Caco-2 (cell line): ENCODE measurements at regions of chr20 and their contacts with region 1.

Region 1: DNA sequence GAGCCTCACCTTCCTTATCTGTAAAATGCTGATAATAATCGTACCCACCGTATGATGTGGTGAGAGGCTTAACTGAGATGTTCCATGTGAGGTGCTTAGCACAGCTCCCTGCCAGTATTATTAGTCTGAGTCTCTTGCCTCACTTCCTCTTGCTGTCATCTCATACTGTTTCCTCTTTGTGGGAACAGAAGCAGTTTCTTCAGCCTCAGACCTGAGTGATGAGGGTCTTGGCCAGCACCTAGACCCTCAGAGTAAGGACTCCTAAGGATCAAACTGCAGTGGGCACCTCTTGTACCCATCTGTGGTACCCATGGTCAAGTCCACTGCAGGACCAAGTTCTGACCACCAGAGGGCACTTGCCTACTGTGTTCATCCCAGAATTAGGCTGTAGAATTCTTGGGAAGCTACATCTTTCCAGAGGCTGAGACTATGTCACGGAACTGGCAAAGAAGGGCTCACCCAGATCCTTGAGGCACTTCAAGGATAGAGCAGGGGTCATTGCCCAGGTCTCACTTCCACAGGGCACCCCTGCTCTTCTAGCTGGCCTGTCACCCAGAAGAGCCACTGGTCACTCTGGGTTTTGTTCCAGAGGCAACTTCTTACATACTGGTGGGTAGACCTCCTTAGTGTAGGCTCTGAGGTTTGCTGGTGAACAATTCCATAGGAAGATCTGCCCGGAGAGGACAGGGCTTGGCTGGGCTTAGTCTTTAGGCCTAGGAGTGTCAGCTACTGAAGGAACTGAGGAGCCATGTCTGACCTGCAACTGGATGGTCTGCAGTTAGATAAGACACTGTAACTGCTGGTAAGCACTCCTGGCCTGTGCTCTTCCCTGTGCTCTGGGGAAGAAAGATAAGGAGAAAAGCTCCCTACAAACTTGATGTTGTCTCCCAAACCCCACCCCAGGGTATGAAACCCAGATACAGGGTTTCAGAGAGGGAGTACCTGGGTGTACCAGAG is 20.6 kb upstream of the SGK2 start:
- DNase-seq: peak; percentile 83 to 88
- H3K4me3 ChIP-seq: no peak overlapping the region
- H3K4me3 Mint-ChIP-seq: no peak overlapping the region
- H3K27ac Mint-ChIP-seq: no peak overlapping the region
- H3K4me1 ChIP-seq: peaks cover 5% of the 10 kb centered on the region; the same call in 1 of the 2 replicates
- H3K4me1 Mint-ChIP-seq: no peaks in the 10 kb centered on the region
- H3K27me3 ChIP-seq: no peaks in the 10 kb centered on the region
- H3K27me3 Mint-ChIP-seq: no peaks in the 10 kb centered on the region
- CTCF ChIP-seq: peak; percentile 99

Region 2: GRCh38 chr20:43448748-43449535 is 89.3 kb before region 1 on chr20:
- CTCF ChIA-PET with region 1: interaction called, 16 read pairs
- POLR2A ChIA-PET with region 1: no interaction called
- intact Hi-C with region 1: loop called (anchors 1 kb)
- DNase-seq: peak; percentile 72 to 78
- H3K4me3 ChIP-seq: no peak overlapping the region
- H3K4me3 Mint-ChIP-seq: no peak overlapping the region
- H3K27ac Mint-ChIP-seq: no peak overlapping the region
- H3K4me1 ChIP-seq: no peaks in the 10 kb centered on the region
- H3K4me1 Mint-ChIP-seq: no peaks in the 10 kb centered on the region
- H3K27me3 ChIP-seq: no peaks in the 10 kb centered on the region
- H3K27me3 Mint-ChIP-seq: peaks cover 2% of the 10 kb centered on the region
- CTCF ChIP-seq: peak; percentile 95

Region 3: DNA sequence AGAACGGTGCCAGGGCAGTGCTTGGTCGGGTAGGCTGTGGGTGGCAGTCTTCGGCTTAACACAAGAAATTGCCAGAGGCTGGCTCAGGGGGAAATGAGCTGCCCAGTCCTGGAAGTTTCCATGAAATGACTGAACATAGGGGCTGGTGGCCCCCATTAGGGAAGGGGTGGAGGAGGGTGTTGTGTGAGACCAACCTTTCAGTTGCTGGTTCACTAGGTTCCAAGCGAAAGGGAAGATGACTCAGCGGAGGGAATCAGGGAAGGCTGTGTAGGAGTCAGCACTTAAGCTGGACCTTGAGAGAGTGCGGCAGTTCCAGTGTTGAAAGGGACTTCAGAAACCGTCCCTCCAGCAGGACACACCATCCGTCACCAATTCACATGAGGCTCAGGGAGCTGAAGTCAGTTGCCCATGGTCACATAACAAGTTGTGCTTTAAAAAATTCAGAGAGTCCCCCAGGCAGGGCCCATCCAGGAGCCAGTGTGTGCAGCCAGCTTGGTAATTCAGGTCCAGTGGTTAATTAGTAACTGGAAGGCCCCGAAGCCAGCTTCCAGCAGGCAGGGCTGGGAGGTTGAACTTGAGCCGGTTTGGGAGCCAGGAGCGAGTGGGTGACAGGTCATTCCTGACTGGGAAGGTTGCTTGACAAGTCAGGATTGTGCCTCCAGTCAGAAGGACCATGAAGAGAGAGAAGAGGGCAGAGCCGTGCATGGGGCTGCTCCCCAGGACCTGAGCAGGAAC is 20.4 kb after region 1 on chr20 and contains the start of gene SGK2:
- CTCF ChIA-PET with region 1: interaction called, 32 read pairs
- POLR2A ChIA-PET with region 1: interaction called, 6 read pairs
- intact Hi-C with region 1: loop called (anchors 2 kb)
- DNase-seq: peak; percentile 90 to 94
- H3K4me3 ChIP-seq: no peak within 1 kb of the TSS
- H3K4me3 Mint-ChIP-seq: peak within 1 kb of the TSS; percentile 15
- H3K27ac Mint-ChIP-seq: peak within 1 kb of the TSS; percentile 23
- H3K4me1 ChIP-seq: peaks cover 30% of the 10 kb centered on the region
- H3K4me1 Mint-ChIP-seq: peaks cover 17% of the 10 kb centered on the region
- H3K27me3 ChIP-seq: no peaks in the 10 kb centered on the region
- H3K27me3 Mint-ChIP-seq: no peaks in the 10 kb centered on the region
- CTCF ChIP-seq: no peak
- total RNA-seq, gene SGK2: 5.2 and 6.6 TPM in 2 replicates

Region 4: GRCh38 chr20:43570496-43570895 is 32.3 kb after region 1 on chr20:
- CTCF ChIA-PET with region 1: no interaction called
- POLR2A ChIA-PET with region 1: no interaction called
- intact Hi-C with region 1: no loop called
- DNase-seq: no peak
- H3K4me3 ChIP-seq: no peak overlapping the region
- H3K4me3 Mint-ChIP-seq: no peak overlapping the region
- H3K27ac Mint-ChIP-seq: no peak overlapping the region
- H3K4me1 ChIP-seq: no peaks in the 10 kb centered on the region
- H3K4me1 Mint-ChIP-seq: no peaks in the 10 kb centered on the region
- H3K27me3 ChIP-seq: no peaks in the 10 kb centered on the region
- H3K27me3 Mint-ChIP-seq: no peaks in the 10 kb centered on the region
- CTCF ChIP-seq: no peak

Region 5: DNA sequence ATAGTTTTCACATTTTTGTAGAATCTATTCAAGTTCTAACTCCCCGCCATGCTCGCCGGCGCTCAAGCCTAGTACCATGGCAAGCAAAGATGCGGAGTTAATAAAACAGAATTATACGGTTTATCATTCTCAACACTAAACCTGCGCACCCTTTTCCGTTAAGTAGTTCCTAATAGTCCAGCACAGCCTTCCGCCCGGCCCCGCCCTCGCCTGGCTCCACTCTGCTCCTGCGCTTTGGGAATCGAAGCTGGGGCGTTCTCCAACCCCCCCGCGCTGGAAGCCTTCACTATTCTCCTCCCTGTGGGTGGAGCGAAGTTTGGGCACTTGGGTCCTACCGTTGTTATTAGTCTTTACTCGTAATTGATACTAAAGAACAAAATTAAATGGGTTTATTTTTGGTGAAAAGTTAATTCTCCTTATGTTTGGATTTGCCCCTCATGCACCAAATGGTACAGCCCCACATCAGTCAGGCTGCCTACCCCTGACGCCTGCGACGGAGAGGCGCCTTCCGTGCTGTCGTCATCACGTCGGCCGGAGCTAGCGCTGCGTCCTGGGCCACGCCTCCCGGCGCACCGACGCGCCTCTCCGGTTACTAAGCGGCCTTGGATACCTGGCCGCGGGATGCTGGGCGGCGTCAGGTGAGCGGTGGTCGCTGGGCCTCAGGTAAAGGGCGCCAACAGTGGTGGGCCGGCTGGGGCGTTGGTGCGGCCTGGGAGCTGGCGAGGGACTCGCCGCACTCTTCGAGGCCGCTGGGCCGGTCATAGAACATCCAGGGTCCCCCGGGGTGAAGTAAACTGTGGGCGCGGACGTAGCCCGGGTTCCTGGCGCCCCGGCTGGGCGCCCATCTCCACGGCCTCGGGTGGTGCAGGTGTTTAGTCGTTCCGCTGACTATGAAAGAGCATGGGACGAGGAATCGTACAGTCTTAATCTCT is 52.5 kb after region 1 on chr20 and contains the start of gene IFT52:
- CTCF ChIA-PET with region 1: interaction called, 37 read pairs
- POLR2A ChIA-PET with region 1: no interaction called
- intact Hi-C with region 1: loop called (anchors 1 kb)
- DNase-seq: peak; percentile 98
- H3K4me3 ChIP-seq: peak within 1 kb of the TSS; percentile 72
- H3K4me3 Mint-ChIP-seq: peak within 1 kb of the TSS; percentile 86
- H3K27ac Mint-ChIP-seq: peak within 1 kb of the TSS; percentile 90
- H3K4me1 ChIP-seq: no peaks in the 10 kb centered on the region
- H3K4me1 Mint-ChIP-seq: peaks cover 15% of the 10 kb centered on the region
- H3K27me3 ChIP-seq: no peaks in the 10 kb centered on the region
- H3K27me3 Mint-ChIP-seq: no peaks in the 10 kb centered on the region
- CTCF ChIP-seq: peak in 1 of 2 experiments; percentile 17
- total RNA-seq, gene IFT52: 56.1 and 70.5 TPM in 2 replicates

Region 6: DNA sequence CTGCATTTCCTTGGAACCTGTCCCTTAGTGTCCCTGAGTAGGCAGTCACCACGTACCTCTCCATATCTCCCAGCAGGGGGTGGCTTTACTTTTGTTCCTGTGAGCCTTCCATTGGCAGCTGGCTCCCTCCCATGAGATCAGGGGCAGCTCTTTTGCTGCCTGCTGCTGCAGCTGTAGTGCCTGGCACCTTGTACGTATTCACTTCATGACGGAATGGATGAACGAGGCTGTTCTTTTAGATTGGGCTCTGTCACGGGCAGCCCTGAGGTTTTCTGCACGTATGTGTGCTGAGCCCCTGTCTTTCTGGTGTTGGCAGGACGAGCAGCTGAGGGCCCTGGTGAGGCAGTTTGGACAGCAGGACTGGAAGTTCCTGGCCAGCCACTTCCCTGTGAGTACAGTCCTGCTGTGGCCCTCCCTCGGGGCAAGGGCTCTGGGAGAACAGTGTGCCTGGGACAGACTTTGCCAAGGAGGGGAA is 143.3 kb after region 1 on chr20:
- CTCF ChIA-PET with region 1: interaction called, 10 read pairs
- POLR2A ChIA-PET with region 1: no interaction called
- intact Hi-C with region 1: no loop called
- DNase-seq: peak in 1 of 2 experiments; percentile 55
- H3K4me3 ChIP-seq: no peak overlapping the region
- H3K4me3 Mint-ChIP-seq: no peak overlapping the region
- H3K27ac Mint-ChIP-seq: no peak overlapping the region
- H3K4me1 ChIP-seq: peaks cover 10% of the 10 kb centered on the region
- H3K4me1 Mint-ChIP-seq: peaks cover 10% of the 10 kb centered on the region
- H3K27me3 ChIP-seq: no peaks in the 10 kb centered on the region
- H3K27me3 Mint-ChIP-seq: no peaks in the 10 kb centered on the region
- CTCF ChIP-seq: peak; percentile 38 to 55

Region 7: GRCh38 chr20:44080646-44081267 is 542.6 kb after region 1 on chr20:
- CTCF ChIA-PET with region 1: interaction called, 6 read pairs
- POLR2A ChIA-PET with region 1: no interaction called
- intact Hi-C with region 1: loop called (anchors 1 kb)
- DNase-seq: peak; percentile 85 to 88
- H3K4me3 ChIP-seq: no peak overlapping the region
- H3K4me3 Mint-ChIP-seq: no peak overlapping the region
- H3K27ac Mint-ChIP-seq: no peak overlapping the region
- H3K4me1 ChIP-seq: no peaks in the 10 kb centered on the region
- H3K4me1 Mint-ChIP-seq: no peaks in the 10 kb centered on the region
- H3K27me3 ChIP-seq: no peaks in the 10 kb centered on the region
- H3K27me3 Mint-ChIP-seq: peaks cover 13% of the 10 kb centered on the region
- CTCF ChIP-seq: peak; percentile 99 to 100